ENCODE measurements at regions of chr5 and their contacts with region 1.

Region 1: GRCh38 chr5:157471709-157472108 is 11.7 kb downstream of the NIPAL4 start:
- DNase-seq: peak; percentile 64
- H3K4me3 Mint-ChIP-seq: no peak overlapping the region
- H3K27ac Mint-ChIP-seq: no peak overlapping the region
- H3K4me1 Mint-ChIP-seq: no peaks in the 10 kb centered on the region
- H3K27me3 Mint-ChIP-seq: no peaks in the 10 kb centered on the region
- CTCF ChIP-seq: peak; percentile 81

Region 2: DNA sequence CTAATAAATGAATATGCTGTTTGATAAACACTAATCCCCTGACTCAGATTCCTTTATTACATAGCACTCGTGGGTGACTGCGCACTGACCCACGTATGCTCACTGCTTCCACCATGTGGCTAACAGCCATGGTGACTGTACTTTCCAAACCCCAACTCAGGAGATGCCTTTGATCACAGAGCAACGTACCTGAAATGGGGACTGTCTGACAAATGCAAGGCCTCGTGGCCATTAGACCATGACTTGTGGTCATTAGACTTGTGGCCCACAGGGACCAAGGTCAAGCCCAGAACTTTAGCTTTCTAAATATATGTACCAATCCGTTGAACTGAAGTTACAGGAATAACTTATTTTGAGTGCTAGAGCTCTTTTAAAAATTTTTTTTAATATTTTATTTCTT is 159.2 kb before region 1 on chr5:
- CTCF ChIA-PET with region 1: interaction called, 10 read pairs
- POLR2A ChIA-PET with region 1: no interaction called
- intact Hi-C with region 1: no loop called
- DNase-seq: peak; percentile 67
- H3K4me3 Mint-ChIP-seq: no peak overlapping the region
- H3K27ac Mint-ChIP-seq: no peak overlapping the region
- H3K4me1 Mint-ChIP-seq: no peaks in the 10 kb centered on the region
- H3K27me3 Mint-ChIP-seq: no peaks in the 10 kb centered on the region
- CTCF ChIP-seq: peak; percentile 82

Region 3: DNA sequence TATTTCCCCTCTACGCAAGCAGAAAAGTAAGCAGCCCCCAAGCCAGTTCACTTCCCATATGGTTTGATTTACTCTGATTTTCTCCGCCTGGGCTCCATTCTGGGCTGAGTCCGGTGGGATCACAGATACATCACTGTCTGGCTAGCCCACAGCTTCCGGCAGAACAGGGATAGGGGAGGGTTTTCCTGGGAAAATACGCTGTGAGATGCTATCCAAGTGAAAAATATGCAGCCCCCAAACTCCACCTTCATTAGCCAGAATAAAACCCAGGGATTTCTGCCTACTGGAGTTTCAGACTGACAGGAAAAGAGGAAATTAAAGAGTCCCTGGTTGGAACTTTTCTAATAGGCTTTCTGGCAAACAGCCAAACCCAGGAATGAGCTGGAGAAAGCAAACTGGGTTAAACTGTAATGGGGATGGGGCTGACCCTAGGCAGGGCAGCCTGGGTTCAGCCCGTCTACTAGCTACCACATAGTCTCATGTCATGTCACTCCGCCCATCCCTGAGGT is 28.6 kb before region 1 on chr5:
- CTCF ChIA-PET with region 1: interaction called, 20 read pairs
- POLR2A ChIA-PET with region 1: no interaction called
- intact Hi-C with region 1: no loop called
- DNase-seq: no peak
- H3K4me3 Mint-ChIP-seq: no peak overlapping the region
- H3K27ac Mint-ChIP-seq: no peak overlapping the region
- H3K4me1 Mint-ChIP-seq: peaks cover 5% of the 10 kb centered on the region
- H3K27me3 Mint-ChIP-seq: no peaks in the 10 kb centered on the region
- CTCF ChIP-seq: no peak

Region 4: GRCh38 chr5:157449011-157449723 is 22.5 kb before region 1 on chr5:
- CTCF ChIA-PET with region 1: interaction called, 29 read pairs
- POLR2A ChIA-PET with region 1: no interaction called
- intact Hi-C with region 1: no loop called
- DNase-seq: peak; percentile 47
- H3K4me3 Mint-ChIP-seq: no peak overlapping the region
- H3K27ac Mint-ChIP-seq: no peak overlapping the region
- H3K4me1 Mint-ChIP-seq: peaks cover 19% of the 10 kb centered on the region
- H3K27me3 Mint-ChIP-seq: no peaks in the 10 kb centered on the region
- CTCF ChIP-seq: no peak

Region 5: GRCh38 chr5:157486221-157486681 is 14.5 kb after region 1 on chr5:
- CTCF ChIA-PET with region 1: interaction called, 28 read pairs
- POLR2A ChIA-PET with region 1: no interaction called
- intact Hi-C with region 1: no loop called
- DNase-seq: no peak
- H3K4me3 Mint-ChIP-seq: no peak overlapping the region
- H3K27ac Mint-ChIP-seq: no peak overlapping the region
- H3K4me1 Mint-ChIP-seq: peaks cover 5% of the 10 kb centered on the region
- H3K27me3 Mint-ChIP-seq: no peaks in the 10 kb centered on the region
- CTCF ChIP-seq: no peak

Region 6: DNA sequence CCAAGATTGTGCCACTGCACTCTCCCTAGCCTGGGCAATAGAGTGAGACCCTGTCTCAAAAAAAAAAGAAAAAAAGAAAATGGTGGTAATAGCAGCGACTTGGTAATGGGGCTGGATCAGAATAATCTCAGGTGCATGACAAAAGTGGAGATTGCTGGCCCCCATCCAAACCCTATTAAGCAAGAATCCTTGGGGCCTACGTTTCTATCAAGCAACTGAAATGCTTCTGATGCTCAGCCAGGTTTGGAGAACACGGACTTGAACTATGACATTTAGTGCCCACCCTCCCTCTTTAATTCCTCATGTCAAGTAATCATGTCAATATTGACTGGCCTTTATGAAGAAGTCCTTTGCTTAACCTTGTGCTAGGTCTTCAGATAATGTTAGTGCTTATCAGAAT is 206.2 kb after region 1 on chr5:
- CTCF ChIA-PET with region 1: no interaction called
- POLR2A ChIA-PET with region 1: no interaction called
- intact Hi-C with region 1: no loop called
- DNase-seq: peak; percentile 54
- H3K4me3 Mint-ChIP-seq: no peak overlapping the region
- H3K27ac Mint-ChIP-seq: no peak overlapping the region
- H3K4me1 Mint-ChIP-seq: no peaks in the 10 kb centered on the region
- H3K27me3 Mint-ChIP-seq: no peaks in the 10 kb centered on the region
- CTCF ChIP-seq: no peak

Measured in MCF 10A (cell line).